Gastrocnemius medialis (tissue), 4 donors: ENCODE measurements at regions of chr19 and their contacts with region 1.

Region 1: GRCh38 chr19:36114763-36115452 is at the start of gene POLR2I:
- DNase-seq: peak; percentile 100
- ATAC-seq: peak; percentile 98
- H3K4me3 ChIP-seq: peak within 1 kb of the TSS; percentile 69 to 94 (median 82)
- H3K27ac ChIP-seq: peak within 1 kb of the TSS; percentile 86 to 95 (median 92)
- H3K4me1 ChIP-seq: peaks cover 17 to 18% of the 10 kb centered on the region in 2 donors
- H3K27me3 ChIP-seq: no peaks in the 10 kb centered on the region
- CTCF ChIP-seq: no peak
- POLR2A ChIP-seq: peak; percentile 61 to 77
- total RNA-seq, gene POLR2I: 61.0 to 88.7 (median 79.4) TPM

Region 2: GRCh38 chr19:35740423-35741202 is 374.3 kb before region 1 on chr19:
- in situ Hi-C with region 1: no loop called
- intact Hi-C with region 1: loop called (anchors 10 kb)
- DNase-seq: peak; percentile 96 to 98
- ATAC-seq: peak; percentile 74
- H3K4me3 ChIP-seq: peak overlapping the region; percentile 52 to 88 (median 78)
- H3K27ac ChIP-seq: peak overlapping the region; percentile 77 to 86 (median 82)
- H3K4me1 ChIP-seq: peaks cover 20 to 26% of the 10 kb centered on the region in 2 donors
- H3K27me3 ChIP-seq: no peaks in the 10 kb centered on the region
- CTCF ChIP-seq: peak in 3 of 5 experiments; percentile 9 to 34 (median 24)
- POLR2A ChIP-seq: peak in 1 of 2 donors; percentile 56

Region 3: GRCh38 chr19:35845215-35846037 is 269.5 kb before region 1 on chr19:
- in situ Hi-C with region 1: no loop called
- intact Hi-C with region 1: no loop called
- DNase-seq: no peak
- ATAC-seq: no peak
- H3K4me3 ChIP-seq: peak overlapping the region in 2 of 4 donors; percentile 3 to 31
- H3K27ac ChIP-seq: no peak overlapping the region
- H3K4me1 ChIP-seq: peaks cover 0 to 3% of the 10 kb centered on the region in 2 donors
- H3K27me3 ChIP-seq: peaks cover 63 to 67% (median 66%) of the 10 kb centered on the region in 3 donors
- CTCF ChIP-seq: no peak
- POLR2A ChIP-seq: no peak

Region 4: GRCh38 chr19:36014029-36014924 is 100.6 kb before region 1 on chr19 and contains the start of gene ALKBH6:
- in situ Hi-C with region 1: no loop called
- intact Hi-C with region 1: loop called (anchors 1 kb)
- DNase-seq: peak; percentile 99 to 100
- ATAC-seq: peak; percentile 98 to 99
- H3K4me3 ChIP-seq: peak within 1 kb of the TSS; percentile 71 to 95 (median 88)
- H3K27ac ChIP-seq: peak within 1 kb of the TSS; percentile 83 to 89 (median 86)
- H3K4me1 ChIP-seq: peaks cover 5 to 16% of the 10 kb centered on the region in 2 donors
- H3K27me3 ChIP-seq: peaks cover 0 to 5% (median 0%) of the 10 kb centered on the region in 3 donors
- CTCF ChIP-seq: peak in 1 of 5 experiments; percentile 16
- POLR2A ChIP-seq: peak in 1 of 2 donors; percentile 16
- total RNA-seq, gene ALKBH6: 10.6 to 50.1 (median 19.0) TPM

Region 5: DNA sequence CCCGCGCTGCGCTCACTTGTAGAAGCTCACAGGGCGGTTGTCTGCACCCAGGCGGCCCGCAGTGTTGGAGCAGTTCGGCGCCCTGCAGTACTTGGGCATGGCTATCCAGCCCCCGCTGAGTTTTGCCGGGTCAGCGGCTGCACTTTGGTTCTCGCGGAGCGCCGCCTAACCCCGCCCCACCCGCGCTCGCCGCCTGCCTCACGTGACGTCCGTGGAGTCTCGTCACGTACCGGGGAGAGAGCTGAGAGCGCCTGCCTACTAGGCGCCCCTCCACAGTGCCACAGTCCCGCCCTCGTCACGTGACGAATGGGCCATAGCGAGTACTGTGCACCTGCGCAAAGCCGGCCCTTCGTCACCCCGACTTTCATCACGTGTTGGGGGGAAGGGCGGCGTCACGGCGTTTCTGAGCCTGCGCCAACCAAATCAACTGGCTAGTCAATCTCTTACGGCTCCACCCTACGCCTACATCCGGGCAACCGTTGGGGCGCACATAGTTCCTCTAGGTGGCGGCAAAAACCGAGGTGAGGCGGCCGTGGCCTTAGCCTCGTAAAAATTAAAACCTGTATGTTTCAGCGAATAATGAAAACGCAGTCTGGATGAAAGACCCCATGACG is 60.7 kb before region 1 on chr19 and contains the start of gene THAP8:
- in situ Hi-C with region 1: no loop called
- intact Hi-C with region 1: loop called (anchors 1 kb)
- DNase-seq: peak; percentile 100
- ATAC-seq: peak; percentile 92 to 95
- H3K4me3 ChIP-seq: peak within 1 kb of the TSS; percentile 67 to 93 (median 83)
- H3K27ac ChIP-seq: peak within 1 kb of the TSS; percentile 87 to 99 (median 96)
- H3K4me1 ChIP-seq: peaks cover 12 to 13% of the 10 kb centered on the region in 2 donors
- H3K27me3 ChIP-seq: no peaks in the 10 kb centered on the region
- CTCF ChIP-seq: peak; percentile 50 to 58 (median 54)
- POLR2A ChIP-seq: peak; percentile 65 to 72
- total RNA-seq, gene THAP8: 6.1 to 10.5 (median 6.1) TPM

Region 6: DNA sequence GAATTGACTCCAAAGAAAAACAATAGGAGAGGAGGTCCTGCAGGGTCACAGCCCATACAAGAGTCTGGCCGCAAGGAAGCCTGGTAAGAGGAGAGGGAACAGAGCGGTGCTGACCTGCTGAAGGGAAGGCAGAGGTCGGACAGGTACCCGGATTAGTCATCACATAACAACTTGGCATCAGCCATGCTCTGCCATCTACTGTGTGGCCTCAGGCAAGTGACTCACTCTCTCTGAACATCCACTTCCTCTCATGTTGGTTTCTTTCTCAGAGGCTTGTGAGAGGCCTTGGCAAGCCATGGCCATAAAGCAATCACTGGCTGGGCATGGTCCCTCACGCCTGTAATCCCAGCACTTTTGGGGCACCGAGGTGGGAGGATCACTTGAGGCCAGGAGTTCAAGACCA is 17.6 kb after region 1 on chr19:
- in situ Hi-C with region 1: no loop called
- intact Hi-C with region 1: loop called (anchors 1 kb)
- DNase-seq: no peak
- ATAC-seq: no peak
- H3K4me3 ChIP-seq: no peak overlapping the region
- H3K27ac ChIP-seq: no peak overlapping the region
- H3K4me1 ChIP-seq: peaks cover 16 to 20% of the 10 kb centered on the region in 2 donors
- H3K27me3 ChIP-seq: no peaks in the 10 kb centered on the region
- CTCF ChIP-seq: no peak
- POLR2A ChIP-seq: no peak

Region 7: GRCh38 chr19:36139473-36140303 is 24.8 kb after region 1 on chr19 and contains the start of gene CAPNS1:
- in situ Hi-C with region 1: no loop called
- intact Hi-C with region 1: loop called (anchors 2 kb)
- DNase-seq: peak; percentile 95 to 97
- ATAC-seq: peak; percentile 78 to 86
- H3K4me3 ChIP-seq: peak within 1 kb of the TSS; percentile 90 to 97 (median 92)
- H3K27ac ChIP-seq: peak within 1 kb of the TSS; percentile 97 to 100 (median 98)
- H3K4me1 ChIP-seq: peaks cover 12 to 26% of the 10 kb centered on the region in 2 donors
- H3K27me3 ChIP-seq: no peaks in the 10 kb centered on the region
- CTCF ChIP-seq: peak in 2 of 5 experiments; percentile 8 to 33
- POLR2A ChIP-seq: peak; percentile 98 to 99
- total RNA-seq, gene CAPNS1: 94.8 to 252 (median 165) TPM

Region 8: GRCh38 chr19:36152352-36153091 is 37.6 kb after region 1 on chr19 and contains the start of gene COX7A1:
- in situ Hi-C with region 1: no loop called
- intact Hi-C with region 1: loop called (anchors 5 kb)
- DNase-seq: peak; percentile 79 to 91
- ATAC-seq: peak; percentile 78 to 89
- H3K4me3 ChIP-seq: peak within 1 kb of the TSS; percentile 80 to 90 (median 90)
- H3K27ac ChIP-seq: peak within 1 kb of the TSS; percentile 97 to 100 (median 100)
- H3K4me1 ChIP-seq: peaks cover 24 to 29% of the 10 kb centered on the region in 2 donors
- H3K27me3 ChIP-seq: no peaks in the 10 kb centered on the region
- CTCF ChIP-seq: no peak
- POLR2A ChIP-seq: peak; percentile 86 to 87
- total RNA-seq, gene COX7A1: 165 to 421 (median 223) TPM